Body of pancreas (tissue), 4 donors: ENCODE measurements at regions of chr11 and their contacts with region 1.

Region 1: DNA sequence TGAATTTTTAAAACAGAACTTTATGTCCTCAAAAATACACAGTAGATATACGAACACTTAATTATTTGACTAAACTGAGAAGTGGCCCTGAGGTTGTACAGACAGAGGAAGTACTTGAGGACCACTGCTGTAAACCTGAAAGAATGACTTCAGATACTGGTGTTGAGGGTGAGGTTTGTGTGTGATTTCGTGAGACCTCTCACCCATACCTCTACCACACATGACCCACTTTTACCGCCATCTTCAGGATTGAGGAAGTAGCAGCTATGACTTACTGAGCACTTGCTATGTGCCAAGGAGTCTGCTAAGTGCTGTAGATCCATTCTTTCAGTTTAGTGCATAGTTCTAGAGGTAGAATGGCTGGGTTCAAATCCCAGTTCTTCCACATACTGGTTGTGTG is 21.9 kb downstream of the MMP13 start:
- DNase-seq: no peak
- ATAC-seq: no peak
- H3K4me3 ChIP-seq: no peak overlapping the region
- H3K27ac ChIP-seq: no peak overlapping the region
- H3K4me1 ChIP-seq: peaks cover 12% of the 10 kb centered on the region
- H3K27me3 ChIP-seq: no peaks in the 10 kb centered on the region
- CTCF ChIP-seq: no peak
- POLR2A ChIP-seq: no peak

Region 2: DNA sequence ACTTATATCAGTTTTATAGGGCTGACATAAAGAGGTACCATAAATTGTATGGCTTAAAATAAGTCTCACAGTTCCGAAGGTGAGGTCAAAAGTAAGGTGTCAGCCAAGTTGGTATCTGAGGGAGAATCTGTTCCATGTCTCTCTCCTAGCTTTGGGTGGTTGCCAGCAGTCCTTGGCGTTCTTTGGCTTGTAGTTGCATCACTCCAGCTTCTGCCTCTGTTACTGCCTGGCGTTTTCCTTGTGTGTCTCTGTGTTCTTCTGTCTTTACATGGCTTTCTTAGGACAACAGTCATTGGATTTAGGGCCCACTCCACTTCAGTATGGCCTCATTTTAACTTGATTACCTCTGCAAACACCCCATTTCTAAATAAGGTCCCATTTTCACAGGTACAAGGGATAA is 419.8 kb before region 1 on chr11:
- intact Hi-C with region 1: no loop called
- DNase-seq: peak; percentile 14 to 41 (median 32)
- ATAC-seq: no peak
- H3K4me3 ChIP-seq: no peak overlapping the region
- H3K27ac ChIP-seq: no peak overlapping the region
- H3K4me1 ChIP-seq: no peaks in the 10 kb centered on the region
- H3K27me3 ChIP-seq: no peaks in the 10 kb centered on the region
- CTCF ChIP-seq: no peak
- POLR2A ChIP-seq: no peak

Region 3: GRCh38 chr11:102831489-102832440 is 101.9 kb before region 1 on chr11:
- intact Hi-C with region 1: loop called (anchors 10 kb)
- DNase-seq: peak; percentile 24 to 34 (median 30)
- ATAC-seq: no peak
- H3K4me3 ChIP-seq: no peak overlapping the region
- H3K27ac ChIP-seq: no peak overlapping the region
- H3K4me1 ChIP-seq: no peaks in the 10 kb centered on the region
- H3K27me3 ChIP-seq: no peaks in the 10 kb centered on the region
- CTCF ChIP-seq: peak in 6 of 7 experiments; percentile 7 to 41 (median 24)
- POLR2A ChIP-seq: no peak

Region 4: DNA sequence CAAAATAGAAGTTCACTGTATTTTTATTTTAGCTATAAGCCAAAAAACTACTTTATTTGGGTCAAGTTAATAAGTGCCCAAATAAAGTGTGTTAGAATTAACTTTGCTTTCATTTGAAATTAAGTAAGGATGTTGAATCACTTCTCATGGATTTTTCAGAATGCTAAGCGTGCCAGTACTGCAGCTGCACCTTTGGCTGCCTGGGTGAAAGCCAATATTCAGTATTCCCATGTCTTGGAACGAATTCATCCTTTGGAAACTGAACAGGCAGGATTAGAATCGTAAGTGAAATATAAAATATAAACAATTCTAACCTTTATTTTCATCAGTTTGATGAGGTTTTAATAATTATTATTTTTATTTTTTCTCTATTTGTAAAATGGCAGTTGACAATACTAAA is 289.2 kb after region 1 on chr11:
- intact Hi-C with region 1: no loop called
- DNase-seq: peak; percentile 10 to 37 (median 24)
- ATAC-seq: no peak
- H3K4me3 ChIP-seq: no peak overlapping the region
- H3K27ac ChIP-seq: no peak overlapping the region
- H3K4me1 ChIP-seq: peaks cover 6% of the 10 kb centered on the region
- H3K27me3 ChIP-seq: no peaks in the 10 kb centered on the region
- CTCF ChIP-seq: no peak
- POLR2A ChIP-seq: no peak